AG04450 (cell line): ENCODE measurements at regions of chr16 and their contacts with region 1.

Region 1: GRCh38 chr16:53198933-53199332 is 144.1 kb downstream of the CHD9 start:
- DNase-seq: no peak
- H3K4me3 ChIP-seq: no peak overlapping the region
- H3K27ac ChIP-seq: no peak overlapping the region
- H3K27me3 ChIP-seq: no peaks in the 10 kb centered on the region
- CTCF ChIP-seq: no peak

Region 2: GRCh38 chr16:53121661-53122060 is 77.3 kb before region 1 on chr16:
- CTCF ChIA-PET with region 1: interaction called, 13 read pairs
- POLR2A ChIA-PET with region 1: no interaction called
- DNase-seq: no peak
- H3K4me3 ChIP-seq: no peak overlapping the region
- H3K27ac ChIP-seq: no peak overlapping the region
- H3K27me3 ChIP-seq: no peaks in the 10 kb centered on the region
- CTCF ChIP-seq: no peak